B cell (primary cell): ENCODE measurements at regions of chr2 and their contacts with region 1.

Region 1: DNA sequence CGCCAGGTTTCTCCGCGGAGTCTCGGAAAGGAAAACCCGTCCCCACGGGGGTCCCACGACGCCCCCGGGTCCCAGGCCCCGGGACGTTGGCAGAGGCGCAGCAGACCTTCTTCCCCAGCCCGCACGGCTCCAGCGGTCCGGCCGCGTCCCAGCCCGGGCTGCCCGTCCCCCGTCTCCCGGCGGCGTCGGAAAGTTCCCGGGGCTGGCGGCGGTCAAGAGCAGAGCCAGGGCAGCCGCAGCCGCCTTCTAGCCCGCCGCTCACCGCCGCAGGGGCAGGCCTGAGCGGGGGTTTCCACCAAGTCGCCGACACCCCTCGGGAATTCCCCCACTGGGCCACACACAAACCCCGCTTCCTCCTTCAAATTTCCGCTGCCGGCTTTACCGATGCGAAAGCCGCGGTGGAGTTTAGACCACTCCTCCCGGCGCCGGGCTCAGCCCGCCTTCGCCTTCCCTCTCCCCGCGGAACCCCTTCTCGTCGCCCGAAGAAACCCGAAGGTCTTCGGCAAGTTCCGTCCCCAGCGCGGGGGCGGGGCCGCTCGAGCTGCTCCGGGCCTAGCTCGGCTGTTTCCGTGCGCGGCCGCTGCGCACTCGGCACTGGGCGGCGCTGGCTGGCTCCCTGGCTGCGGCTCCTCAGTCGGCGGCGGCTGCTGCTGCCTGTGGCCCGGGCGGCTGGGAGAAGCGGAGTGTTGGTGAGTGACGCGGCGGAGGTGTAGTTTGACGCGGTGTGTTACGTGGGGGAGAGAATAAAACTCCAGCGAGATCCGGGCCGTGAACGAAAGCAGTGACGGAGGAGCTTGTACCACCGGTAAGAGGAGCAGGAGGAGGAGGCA is at the start of gene CREB1:
- DNase-seq: peak; percentile 100
- ATAC-seq: peak; percentile 77
- H3K4me3 ChIP-seq: peak within 1 kb of the TSS; percentile 89 to 98 (median 97)
- H3K4me3 Mint-ChIP-seq: peak within 1 kb of the TSS; percentile 93
- H3K27ac ChIP-seq: peak within 1 kb of the TSS; percentile 100
- H3K27ac Mint-ChIP-seq: peak within 1 kb of the TSS; percentile 98
- H3K4me1 ChIP-seq: peaks cover 70 to 73% of the 10 kb centered on the region in 2 donors
- H3K4me1 Mint-ChIP-seq: peaks cover 68% of the 10 kb centered on the region
- H3K27me3 ChIP-seq: no peaks in the 10 kb centered on the region
- H3K27me3 Mint-ChIP-seq: no peaks in the 10 kb centered on the region
- CTCF ChIP-seq: no peak
- total RNA-seq, gene CREB1: 149 and 156 TPM in 2 replicates

Region 2: DNA sequence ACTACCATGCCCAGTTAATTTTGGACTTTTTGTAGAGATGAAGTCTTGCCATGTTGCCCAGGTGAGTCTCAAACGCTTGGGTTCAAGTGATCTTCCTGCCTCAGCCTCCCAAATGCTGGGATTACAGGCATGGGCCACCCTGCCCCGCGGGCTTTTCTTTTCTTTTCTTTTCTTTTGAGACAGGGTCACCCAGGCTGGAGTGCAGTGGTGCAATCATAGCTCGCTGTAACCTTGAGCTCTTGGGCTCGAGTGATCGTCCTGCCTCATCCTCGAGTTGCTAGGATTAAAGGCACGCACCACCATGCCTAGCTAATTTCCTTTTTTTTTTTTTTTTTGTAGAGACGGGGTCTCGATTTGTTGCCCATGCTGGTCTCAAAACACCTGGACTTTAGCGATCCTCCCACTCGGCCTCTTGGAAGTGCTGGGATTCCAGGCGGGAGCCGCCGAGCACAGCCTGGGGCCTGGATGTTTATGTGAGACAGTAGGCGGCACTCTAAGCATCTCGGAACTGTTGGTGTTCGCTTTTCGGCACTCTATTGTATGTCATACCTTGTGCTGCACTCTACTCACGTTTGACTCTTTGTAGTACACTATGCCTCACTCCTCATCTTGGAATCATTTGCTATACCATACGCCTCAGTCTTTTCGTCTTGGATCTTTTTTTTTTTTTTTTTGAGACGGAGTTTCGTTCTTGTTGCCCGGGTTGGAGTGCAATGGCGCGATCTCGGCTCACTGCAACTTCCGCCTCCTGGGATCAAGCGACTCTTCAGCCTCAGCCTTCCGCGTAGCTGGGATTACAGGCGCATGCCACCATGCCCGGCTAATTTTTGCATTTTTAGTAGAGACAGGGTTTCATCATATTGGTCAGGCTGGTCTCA is 1279.6 kb before region 1 on chr2:
- CTCF ChIA-PET with region 1: no interaction called
- POLR2A ChIA-PET with region 1: no interaction called
- intact Hi-C with region 1: loop called (anchors 10 kb)
- DNase-seq: peak; percentile 38
- ATAC-seq: no peak
- H3K4me3 ChIP-seq: peak overlapping the region; percentile 16 to 43 (median 39)
- H3K4me3 Mint-ChIP-seq: peak overlapping the region; percentile 85
- H3K27ac ChIP-seq: no peak overlapping the region
- H3K27ac Mint-ChIP-seq: peak overlapping the region; percentile 5
- H3K4me1 ChIP-seq: peaks cover 12 to 30% of the 10 kb centered on the region in 2 donors
- H3K4me1 Mint-ChIP-seq: peaks cover 26% of the 10 kb centered on the region
- H3K27me3 ChIP-seq: peaks cover 0 to 37% (median 26%) of the 10 kb centered on the region in 4 experiments
- H3K27me3 Mint-ChIP-seq: peaks cover 38% of the 10 kb centered on the region
- CTCF ChIP-seq: no peak

Region 3: DNA sequence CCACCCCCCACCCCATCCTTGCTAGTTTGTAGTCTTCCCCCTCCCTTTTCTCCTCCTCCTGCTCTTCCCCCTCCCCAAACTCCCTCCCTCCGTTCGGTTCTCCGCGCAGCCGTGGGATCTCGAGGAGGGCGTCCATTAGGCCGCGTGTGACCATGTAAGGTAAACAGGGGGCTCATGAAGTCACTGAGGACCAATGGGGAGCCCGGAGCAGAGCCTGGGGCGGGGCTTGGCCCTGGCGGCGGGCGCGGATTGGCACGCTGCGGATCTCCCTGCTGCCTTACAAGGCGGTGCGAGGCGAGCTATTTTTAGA is 363.6 kb before region 1 on chr2:
- CTCF ChIA-PET with region 1: no interaction called
- POLR2A ChIA-PET with region 1: interaction called, 31 read pairs
- intact Hi-C with region 1: loop called (anchors 1 kb)
- DNase-seq: peak; percentile 98
- ATAC-seq: peak; percentile 87
- H3K4me3 ChIP-seq: peak overlapping the region in 4 of 5 experiments; percentile 81 to 97 (median 85)
- H3K4me3 Mint-ChIP-seq: peak overlapping the region; percentile 98
- H3K27ac ChIP-seq: peak overlapping the region; percentile 95 to 99
- H3K27ac Mint-ChIP-seq: peak overlapping the region; percentile 99
- H3K4me1 ChIP-seq: peaks cover 42 to 45% of the 10 kb centered on the region in 2 donors
- H3K4me1 Mint-ChIP-seq: peaks cover 54% of the 10 kb centered on the region
- H3K27me3 ChIP-seq: no peaks in the 10 kb centered on the region
- H3K27me3 Mint-ChIP-seq: no peaks in the 10 kb centered on the region
- CTCF ChIP-seq: no peak

Region 4: GRCh38 chr2:207503234-207503633 is 26.3 kb before region 1 on chr2:
- CTCF ChIA-PET with region 1: interaction called, 10 read pairs
- POLR2A ChIA-PET with region 1: interaction called, 30 read pairs
- intact Hi-C with region 1: loop called (anchors 1 kb)
- DNase-seq: no peak
- ATAC-seq: peak; percentile 48
- H3K4me3 ChIP-seq: peak overlapping the region in 4 of 5 experiments; percentile 3 to 35 (median 6)
- H3K4me3 Mint-ChIP-seq: peak overlapping the region; percentile 68
- H3K27ac ChIP-seq: peak overlapping the region; percentile 84 to 88
- H3K27ac Mint-ChIP-seq: peak overlapping the region; percentile 90
- H3K4me1 ChIP-seq: peaks cover 76 to 78% of the 10 kb centered on the region in 2 donors
- H3K4me1 Mint-ChIP-seq: peaks cover 79% of the 10 kb centered on the region
- H3K27me3 ChIP-seq: no peaks in the 10 kb centered on the region
- H3K27me3 Mint-ChIP-seq: no peaks in the 10 kb centered on the region
- CTCF ChIP-seq: no peak

Region 5: GRCh38 chr2:207662203-207662602 is 132.7 kb after region 1 on chr2:
- CTCF ChIA-PET with region 1: no interaction called
- POLR2A ChIA-PET with region 1: interaction called, 7 read pairs
- intact Hi-C with region 1: loop called (anchors 2 kb)
- DNase-seq: peak; percentile 94
- ATAC-seq: peak; percentile 96
- H3K4me3 ChIP-seq: peak overlapping the region in 4 of 5 experiments; percentile 1 to 67 (median 44)
- H3K4me3 Mint-ChIP-seq: peak overlapping the region; percentile 87
- H3K27ac ChIP-seq: peak overlapping the region; percentile 79 to 98
- H3K27ac Mint-ChIP-seq: peak overlapping the region; percentile 97
- H3K4me1 ChIP-seq: peaks cover 44 to 58% of the 10 kb centered on the region in 2 donors
- H3K4me1 Mint-ChIP-seq: peaks cover 65% of the 10 kb centered on the region
- H3K27me3 ChIP-seq: no peaks in the 10 kb centered on the region
- H3K27me3 Mint-ChIP-seq: no peaks in the 10 kb centered on the region
- CTCF ChIP-seq: no peak

Region 6: DNA sequence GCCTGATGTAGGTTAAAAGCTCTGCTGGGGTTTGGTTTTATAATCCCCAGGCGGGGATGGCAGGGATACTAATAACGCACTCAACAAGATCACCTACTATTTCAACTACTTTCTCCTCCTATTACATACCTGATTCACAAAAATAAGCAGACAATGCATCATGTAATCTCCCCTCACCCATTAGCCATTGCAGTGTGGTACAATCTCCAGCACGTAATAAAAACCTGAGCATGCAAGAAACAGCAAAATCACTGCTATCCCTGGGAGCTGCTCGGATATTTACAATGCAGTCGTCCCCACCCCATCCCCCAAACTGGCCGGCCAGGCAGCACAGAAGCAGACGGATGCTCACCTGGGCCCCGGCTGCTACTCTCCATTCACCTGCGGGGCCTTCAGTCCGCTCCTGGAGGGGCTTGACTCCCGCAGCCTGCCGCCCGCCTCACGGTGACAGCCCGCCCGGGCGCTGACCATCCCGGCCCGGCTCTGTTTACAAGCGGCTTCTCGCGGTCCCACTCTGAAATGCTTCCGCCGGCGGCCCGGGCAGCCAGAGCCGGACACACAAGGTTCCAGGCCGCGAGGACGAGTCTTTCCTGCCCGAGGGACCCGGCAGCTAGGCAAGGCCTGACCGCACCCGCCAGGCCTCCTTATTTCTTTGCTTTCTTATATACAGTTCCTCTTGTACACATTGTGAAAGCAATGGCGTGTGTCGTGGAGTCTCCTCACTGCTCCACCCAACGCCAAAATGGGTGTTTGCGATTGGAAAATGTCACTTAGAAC is 495.7 kb after region 1 on chr2 and contains the start of gene PLEKHM3:
- CTCF ChIA-PET with region 1: no interaction called
- POLR2A ChIA-PET with region 1: no interaction called
- intact Hi-C with region 1: loop called (anchors 10 kb)
- DNase-seq: peak; percentile 83
- ATAC-seq: peak; percentile 92
- H3K4me3 ChIP-seq: peak within 1 kb of the TSS; percentile 71 to 95 (median 92)
- H3K4me3 Mint-ChIP-seq: peak within 1 kb of the TSS; percentile 95
- H3K27ac ChIP-seq: peak within 1 kb of the TSS; percentile 57 to 84
- H3K27ac Mint-ChIP-seq: peak within 1 kb of the TSS; percentile 96
- H3K4me1 ChIP-seq: peaks cover 7 to 8% of the 10 kb centered on the region in 2 donors
- H3K4me1 Mint-ChIP-seq: peaks cover 25% of the 10 kb centered on the region
- H3K27me3 ChIP-seq: no peaks in the 10 kb centered on the region
- H3K27me3 Mint-ChIP-seq: no peaks in the 10 kb centered on the region
- CTCF ChIP-seq: no peak
- total RNA-seq, gene PLEKHM3: 17.7 and 19.5 TPM in 2 replicates